Prostate gland (tissue), 2 donors: ENCODE measurements at regions of chr4 and their contacts with region 1.

Region 1: DNA sequence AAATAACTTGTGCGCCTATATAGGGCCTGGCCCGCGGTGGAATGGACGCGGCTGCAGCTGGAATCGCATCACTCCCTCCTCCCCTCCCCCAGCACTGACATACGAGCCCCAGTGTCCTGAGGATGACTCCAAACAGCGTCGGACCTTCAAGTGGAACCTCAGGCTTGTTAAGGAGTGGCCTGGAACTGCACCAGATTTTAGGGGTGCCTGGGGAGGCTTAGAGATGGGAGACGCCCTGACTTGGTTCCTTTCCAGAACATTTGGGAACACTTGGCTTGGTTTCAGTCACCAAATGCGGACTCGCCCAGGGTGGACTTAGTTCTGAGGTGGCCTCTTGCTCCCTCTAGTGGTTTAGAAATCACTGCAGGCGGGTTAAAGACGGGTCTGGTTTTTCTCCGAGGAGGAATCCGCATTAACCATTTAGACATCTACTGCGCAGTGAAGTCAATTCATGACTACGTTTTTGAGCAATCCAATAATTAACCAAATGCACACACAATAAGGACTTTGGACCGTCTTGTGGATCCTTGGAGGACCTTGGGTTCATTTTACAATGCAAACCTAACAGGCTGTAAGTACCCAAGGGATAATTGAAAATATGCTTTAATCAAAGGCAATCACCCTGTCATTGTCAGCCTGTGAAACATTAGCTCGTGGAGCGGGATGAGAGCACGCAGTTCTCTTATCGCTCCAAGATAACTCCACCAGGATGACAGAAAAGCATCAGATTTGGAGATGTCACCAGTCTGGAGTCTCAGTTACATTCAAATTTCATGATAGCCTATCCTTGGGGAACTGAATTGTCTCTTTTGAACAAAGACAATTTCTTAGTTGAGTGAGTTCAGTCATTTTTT is 11.2 kb upstream of the PDGFRA start:
- DNase-seq: peak; percentile 65
- H3K4me3 ChIP-seq: peak overlapping the region; percentile 12 to 15
- H3K27ac ChIP-seq: no peak overlapping the region
- H3K4me1 ChIP-seq: no peaks in the 10 kb centered on the region
- H3K27me3 ChIP-seq: no peaks in the 10 kb centered on the region
- CTCF ChIP-seq: peak; percentile 84 to 94 (median 90)
- POLR2A ChIP-seq: no peak

Region 2: GRCh38 chr4:53196882-53197771 is 1020.7 kb before region 1 on chr4:
- intact Hi-C with region 1: loop called (anchors 5 kb)
- DNase-seq: peak; percentile 13
- H3K4me3 ChIP-seq: no peak overlapping the region
- H3K27ac ChIP-seq: no peak overlapping the region
- H3K4me1 ChIP-seq: no peaks in the 10 kb centered on the region
- H3K27me3 ChIP-seq: no peaks in the 10 kb centered on the region
- CTCF ChIP-seq: peak; percentile 64 to 84 (median 74)
- POLR2A ChIP-seq: no peak

Region 3: DNA sequence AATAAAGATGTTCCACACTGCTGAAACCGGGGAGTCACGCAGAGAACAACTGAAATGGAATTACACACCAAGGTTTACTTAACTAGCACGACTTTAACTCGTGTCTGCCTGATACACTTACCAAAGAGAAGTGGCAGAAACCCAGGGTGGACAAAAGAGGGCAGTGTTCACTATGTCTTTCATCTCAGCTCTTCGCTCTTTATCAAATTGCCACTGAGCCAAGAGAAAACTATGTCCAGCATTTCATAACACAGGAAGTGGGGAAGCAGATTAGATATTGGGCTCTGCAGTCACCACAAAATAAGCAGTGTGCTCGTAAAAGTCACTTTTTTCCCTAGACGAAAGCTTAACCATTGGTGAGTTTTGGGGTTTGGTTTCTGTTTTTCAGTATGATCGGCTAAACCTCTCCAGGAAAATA is 309.2 kb before region 1 on chr4:
- intact Hi-C with region 1: loop called (anchors 5 kb)
- DNase-seq: peak; percentile 46
- H3K4me3 ChIP-seq: no peak overlapping the region
- H3K27ac ChIP-seq: no peak overlapping the region
- H3K4me1 ChIP-seq: no peaks in the 10 kb centered on the region
- H3K27me3 ChIP-seq: no peaks in the 10 kb centered on the region
- CTCF ChIP-seq: peak in 3 of 4 experiments; percentile 50 to 73 (median 66)
- POLR2A ChIP-seq: no peak

Region 4: DNA sequence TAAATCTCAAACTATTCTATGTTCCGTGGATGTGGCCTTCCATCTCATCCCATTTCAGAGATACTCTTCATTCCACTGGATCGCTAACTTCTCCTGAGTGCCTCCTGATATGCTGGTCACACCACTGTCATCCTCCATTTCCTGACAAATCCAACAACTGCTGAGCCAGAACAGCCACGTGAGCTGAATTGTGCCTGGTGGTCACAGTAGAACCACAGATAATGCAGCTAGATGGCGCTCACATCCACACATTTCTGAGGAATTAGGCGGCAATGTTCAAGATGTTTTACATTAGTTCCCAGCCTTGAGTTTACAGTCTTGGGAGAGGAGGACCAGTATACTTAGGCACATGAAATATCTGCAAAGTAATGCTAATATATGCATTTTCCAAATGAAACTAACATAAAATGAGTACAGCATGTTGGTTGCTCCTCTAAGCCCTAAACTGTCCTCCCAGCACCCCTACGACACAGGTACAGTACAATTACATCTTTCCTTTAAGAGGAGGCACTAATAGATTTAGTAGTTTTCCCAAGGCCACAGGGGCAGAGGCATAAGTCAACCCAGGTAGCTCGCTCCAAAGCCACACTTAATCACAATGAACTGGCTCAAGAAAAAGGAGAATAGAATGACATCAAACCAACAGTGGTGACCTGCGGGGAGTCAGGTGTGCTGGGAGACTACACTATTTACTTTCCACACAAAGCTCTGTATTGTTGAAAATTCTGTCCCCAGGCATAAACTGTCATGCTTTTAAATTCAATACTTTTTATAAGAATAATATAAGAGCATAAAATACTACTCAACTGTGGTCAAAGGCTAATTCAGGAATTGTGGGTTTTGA is 287.7 kb before region 1 on chr4:
- intact Hi-C with region 1: loop called (anchors 2 kb)
- DNase-seq: peak; percentile 79
- H3K4me3 ChIP-seq: no peak overlapping the region
- H3K27ac ChIP-seq: no peak overlapping the region
- H3K4me1 ChIP-seq: no peaks in the 10 kb centered on the region
- H3K27me3 ChIP-seq: no peaks in the 10 kb centered on the region
- CTCF ChIP-seq: peak in 3 of 4 experiments; percentile 73 to 84 (median 82)
- POLR2A ChIP-seq: no peak